Astrocyte of the cerebellum (primary cell): ENCODE measurements at regions of chr5 and their contacts with region 1.

Region 1: DNA sequence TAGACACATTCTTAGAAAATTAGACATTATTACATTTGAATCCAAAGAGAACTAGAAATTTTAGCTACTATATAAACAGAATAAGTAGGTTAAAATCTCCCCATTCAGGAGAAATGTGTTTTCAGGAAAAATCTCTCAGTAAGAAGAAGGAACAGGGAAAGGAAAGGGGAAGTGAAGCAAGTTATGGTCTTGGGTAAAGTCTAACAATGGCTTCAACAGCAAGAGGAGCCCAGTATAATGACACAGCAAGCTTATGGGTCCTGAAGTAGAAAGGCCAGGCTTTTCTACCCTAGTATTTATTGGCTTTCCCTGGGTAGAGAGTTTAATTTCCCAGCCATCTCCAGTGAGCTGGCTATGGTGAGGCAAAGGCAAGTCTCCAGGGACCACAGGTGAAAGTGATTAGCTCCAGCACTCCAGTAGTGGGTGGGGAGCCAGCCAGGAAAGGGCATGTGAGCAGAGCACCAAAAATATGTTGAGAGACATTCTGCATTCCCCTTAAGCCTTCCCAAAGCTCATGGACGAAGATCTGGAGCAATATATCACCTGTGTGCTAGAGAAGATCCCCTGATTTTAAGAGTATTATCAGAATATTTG is 981.7 kb downstream of the NR2F1-AS1 start:
- DNase-seq: no peak
- H3K4me3 ChIP-seq: no peak overlapping the region
- CTCF ChIP-seq: no peak

Region 2: GRCh38 chr5:92559781-92560180 is 39.5 kb before region 1 on chr5:
- in situ Hi-C with region 1: loop called (anchors 5 kb)
- DNase-seq: peak; percentile 66
- H3K4me3 ChIP-seq: no peak overlapping the region
- CTCF ChIP-seq: peak; percentile 48

Region 3: DNA sequence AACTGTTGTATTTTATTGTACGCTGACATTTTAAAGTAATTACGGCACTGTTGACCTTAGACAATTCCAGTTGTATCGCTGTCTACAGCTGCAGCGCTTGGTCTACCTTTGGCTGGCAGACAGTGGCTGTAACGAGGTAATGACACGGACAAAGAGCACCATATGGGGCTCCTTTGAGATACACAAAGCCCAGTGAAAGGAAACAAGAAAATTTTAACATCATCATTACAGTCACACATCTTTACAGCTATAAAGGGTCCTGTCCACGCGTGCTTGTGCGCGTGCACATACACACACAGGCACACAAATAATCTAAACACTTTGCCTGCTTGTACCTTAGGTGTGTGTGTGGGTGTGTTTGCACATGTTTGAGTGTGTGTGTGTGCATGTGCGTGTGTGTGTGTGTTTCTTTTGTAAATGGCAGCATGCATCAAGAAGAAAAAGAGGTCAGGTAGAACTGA is 35.7 kb after region 1 on chr5:
- in situ Hi-C with region 1: no loop called
- DNase-seq: no peak
- H3K4me3 ChIP-seq: no peak overlapping the region
- CTCF ChIP-seq: no peak